Activated CD4-positive, alpha-beta memory T cell treated with anti-CD3 and anti-CD28 coated beads, Interleukin-2, amount 10 ng/mL, durations not matched to agents 7 days and 5 days (primary cell): ENCODE measurements at regions of chr16 and their contacts with region 1.

Region 1: GRCh38 chr16:3400779-3401688 is at the starts of genes ZNF174 and ZSCAN32:
- DNase-seq: peak; percentile 99
- H3K4me3 Mint-ChIP-seq: peak within 1 kb of the TSS; percentile 87
- H3K27ac Mint-ChIP-seq: peak within 1 kb of the TSS; percentile 86
- H3K4me1 Mint-ChIP-seq: peaks cover 37% of the 10 kb centered on the region
- H3K27me3 Mint-ChIP-seq: no peaks in the 10 kb centered on the region
- total RNA-seq, gene ZNF174: 11.0 to 12.4 TPM
- total RNA-seq, gene ZSCAN32: 17.8 to 18.3 TPM

Region 2: DNA sequence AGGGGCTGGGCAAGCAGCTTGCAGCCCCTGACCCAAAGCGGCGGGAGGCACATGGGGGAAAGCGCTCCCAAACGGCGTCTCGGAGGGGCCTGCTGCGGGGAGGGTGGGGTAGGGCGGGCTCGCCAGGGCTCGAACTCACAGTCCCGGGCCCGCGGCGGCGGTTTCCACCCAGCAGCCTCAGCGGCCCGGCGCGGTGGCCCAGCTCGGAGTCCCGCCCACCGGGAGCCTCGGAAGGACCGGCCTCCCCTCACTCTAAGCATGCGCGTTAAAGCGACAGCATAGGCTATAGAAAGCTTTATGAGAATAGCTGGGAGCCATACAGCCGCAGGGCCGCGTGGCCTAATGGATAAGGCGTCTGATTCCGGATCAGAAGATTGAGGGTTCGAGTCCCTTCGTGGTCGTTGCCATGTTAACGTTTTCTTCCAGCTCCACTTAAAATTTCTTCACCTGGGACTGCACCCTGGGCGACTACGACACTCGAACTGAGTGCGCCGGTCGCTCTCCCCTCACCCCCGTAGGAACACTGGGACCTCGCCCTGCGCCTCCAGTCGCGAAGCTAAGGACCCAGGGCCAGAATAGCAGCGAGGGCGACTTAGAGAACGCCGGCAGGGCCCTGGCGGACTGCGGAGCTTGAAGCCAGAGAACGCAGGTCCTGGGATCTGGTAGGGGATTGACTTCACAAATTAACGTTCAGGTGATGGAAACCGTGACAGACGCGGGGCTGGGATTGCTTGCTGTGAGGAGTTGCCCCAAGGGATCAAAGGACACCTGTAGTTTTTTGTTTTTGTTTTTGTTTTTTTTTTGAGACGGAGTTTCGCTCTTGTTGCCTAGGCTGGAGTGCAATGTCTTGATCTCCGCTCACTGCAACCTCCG is 250.5 kb before region 1 on chr16:
- CTCF ChIA-PET with region 1: no interaction called
- POLR2A ChIA-PET with region 1: interaction called, 10 read pairs
- DNase-seq: peak; percentile 99
- H3K4me3 Mint-ChIP-seq: peak overlapping the region; percentile 81
- H3K27ac Mint-ChIP-seq: peak overlapping the region; percentile 82
- H3K4me1 Mint-ChIP-seq: peaks cover 37% of the 10 kb centered on the region
- H3K27me3 Mint-ChIP-seq: peaks cover 22% of the 10 kb centered on the region

Region 3: GRCh38 chr16:3234543-3235541 is 166.2 kb before region 1 on chr16 and contains the start of gene ZNF200:
- CTCF ChIA-PET with region 1: no interaction called
- POLR2A ChIA-PET with region 1: interaction called, 16 read pairs
- DNase-seq: peak; percentile 95
- H3K4me3 Mint-ChIP-seq: peak within 1 kb of the TSS; percentile 83
- H3K27ac Mint-ChIP-seq: peak within 1 kb of the TSS; percentile 97
- H3K4me1 Mint-ChIP-seq: peaks cover 31% of the 10 kb centered on the region
- H3K27me3 Mint-ChIP-seq: no peaks in the 10 kb centered on the region
- total RNA-seq, gene ZNF200: 13.1 to 14.9 TPM

Region 4: GRCh38 chr16:3282730-3283524 is 118.1 kb before region 1 on chr16 and contains the start of gene ZNF263:
- CTCF ChIA-PET with region 1: interaction called, 8 read pairs
- POLR2A ChIA-PET with region 1: interaction called, 36 read pairs
- DNase-seq: peak; percentile 94
- H3K4me3 Mint-ChIP-seq: peak within 1 kb of the TSS; percentile 90
- H3K27ac Mint-ChIP-seq: peak within 1 kb of the TSS; percentile 99
- H3K4me1 Mint-ChIP-seq: peaks cover 32% of the 10 kb centered on the region
- H3K27me3 Mint-ChIP-seq: peaks cover 2% of the 10 kb centered on the region
- total RNA-seq, gene ZNF263: 19.4 to 21.3 TPM

Region 5: DNA sequence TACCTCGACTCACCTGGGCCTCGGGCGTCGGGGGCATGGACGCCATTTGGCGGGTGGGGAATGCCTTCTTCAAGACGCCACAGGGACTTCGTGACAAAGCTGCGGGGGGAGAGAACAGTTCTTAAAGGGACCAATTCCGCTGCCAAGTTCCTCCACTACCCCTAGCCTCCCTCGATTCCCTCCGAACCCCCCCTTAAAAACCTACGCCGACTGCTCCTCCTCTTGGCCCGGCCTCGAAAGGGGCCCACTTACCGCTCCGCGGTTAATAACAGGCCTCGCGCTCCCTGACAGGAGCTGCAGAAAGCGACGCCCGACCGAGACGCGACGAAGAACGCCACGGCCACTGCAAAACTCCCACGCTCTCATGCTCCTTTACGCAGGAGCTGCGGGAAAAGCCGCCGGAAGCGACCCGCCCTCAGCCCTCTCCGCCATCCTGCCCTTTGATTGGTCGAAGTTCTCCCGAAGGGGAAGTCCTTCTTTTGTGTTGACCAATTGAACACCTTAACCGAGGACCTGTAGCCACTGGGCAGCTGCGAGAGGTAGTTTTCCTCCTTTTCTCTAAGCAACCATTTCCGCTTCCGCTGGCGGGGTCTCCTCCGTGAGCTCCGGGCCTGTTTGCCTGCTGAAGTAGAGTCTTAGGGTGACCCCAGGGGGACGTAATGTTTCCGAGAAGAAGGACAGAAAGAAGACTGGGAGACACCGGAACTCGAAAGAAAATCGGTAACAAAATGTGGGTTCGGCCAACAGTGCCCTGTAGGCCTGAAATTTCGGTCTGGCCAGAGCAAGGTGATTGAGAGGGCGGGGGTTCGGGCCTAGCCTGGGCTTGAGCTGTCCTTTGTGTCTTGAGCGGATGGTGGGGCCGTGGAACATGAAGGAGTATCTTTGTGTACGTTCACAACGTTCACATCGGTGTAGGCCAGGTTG is 42.3 kb after region 1 on chr16 and contains the starts of genes NAA60 and ZNF597:
- CTCF ChIA-PET with region 1: interaction called, 13 read pairs
- POLR2A ChIA-PET with region 1: interaction called, 23 read pairs
- DNase-seq: peak; percentile 80
- H3K4me3 Mint-ChIP-seq: peak within 1 kb of the TSS; percentile 83
- H3K27ac Mint-ChIP-seq: peak within 1 kb of the TSS; percentile 87
- H3K4me1 Mint-ChIP-seq: peaks cover 19% of the 10 kb centered on the region
- H3K27me3 Mint-ChIP-seq: no peaks in the 10 kb centered on the region
- total RNA-seq, gene NAA60: 46.1 to 46.4 TPM
- total RNA-seq, gene ZNF597: 2.1 to 2.2 TPM

Region 6: DNA sequence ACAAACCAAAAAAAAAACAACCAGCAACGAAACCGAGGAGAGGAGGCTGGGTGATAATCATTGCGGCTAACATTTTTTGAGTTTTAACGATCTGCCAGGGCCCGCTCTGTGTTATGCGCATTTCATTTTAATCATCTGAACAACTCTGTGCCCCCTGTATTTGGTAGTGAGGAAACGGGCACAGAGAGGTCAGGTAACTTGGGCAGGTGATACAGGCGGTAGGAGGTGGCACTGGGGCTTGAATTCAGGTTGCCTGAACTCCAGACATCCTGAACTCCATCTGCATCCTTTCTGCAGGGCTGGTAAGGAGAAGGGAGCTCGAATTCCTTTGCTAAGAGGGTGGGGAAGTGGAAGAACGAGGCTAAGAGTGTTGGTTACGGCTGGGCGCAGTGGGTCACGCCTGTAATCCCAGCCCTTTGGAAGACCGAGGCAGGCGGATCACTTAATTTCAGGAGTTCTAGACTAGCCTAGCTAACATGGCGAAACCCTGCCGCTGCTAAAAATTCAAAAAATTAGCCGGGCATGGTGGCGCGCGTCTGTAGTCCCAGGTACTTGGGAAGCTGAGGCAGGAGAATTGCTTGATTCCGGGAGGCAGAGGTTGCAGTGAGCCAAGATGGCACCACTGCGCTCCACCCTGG is 100.9 kb after region 1 on chr16:
- CTCF ChIA-PET with region 1: interaction called, 10 read pairs
- POLR2A ChIA-PET with region 1: interaction called, 5 read pairs
- DNase-seq: no peak
- H3K4me3 Mint-ChIP-seq: peak overlapping the region; percentile 91
- H3K27ac Mint-ChIP-seq: peak overlapping the region; percentile 96
- H3K4me1 Mint-ChIP-seq: peaks cover 62% of the 10 kb centered on the region
- H3K27me3 Mint-ChIP-seq: peaks cover 3% of the 10 kb centered on the region